GM10248 (cell line): ENCODE measurements at regions of chr12 and their contacts with region 1.

Region 1: DNA sequence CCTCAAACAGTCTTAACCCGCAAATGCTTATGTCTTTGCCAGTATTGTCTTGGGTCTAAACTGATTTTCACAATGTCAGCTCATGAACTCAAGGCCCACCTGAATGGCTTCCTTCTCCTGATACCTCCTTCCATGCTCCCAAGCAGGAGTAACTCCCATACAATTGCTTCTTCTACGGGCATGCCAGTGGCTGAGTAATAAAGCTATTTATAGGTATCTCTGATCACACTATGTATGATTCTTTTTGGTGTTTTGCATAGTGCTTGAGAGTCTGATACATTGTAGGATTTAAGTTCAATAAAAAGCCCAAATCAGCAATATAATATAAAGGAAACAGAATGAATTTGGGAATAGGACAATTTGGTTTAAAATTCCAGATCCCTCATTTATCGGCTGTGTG is 235.0 kb upstream of the DCN start:
- DNase-seq: no peak
- CTCF ChIP-seq: no peak

Region 2: GRCh38 chr12:91406920-91407341 is 10.7 kb before region 1 on chr12:
- CTCF ChIA-PET with region 1: interaction called, 11 read pairs
- POLR2A ChIA-PET with region 1: no interaction called
- DNase-seq: peak; percentile 8
- CTCF ChIP-seq: no peak